ENCODE measurements at regions of chr9 and their contacts with region 1.

Region 1: GRCh38 chr9:4366591-4367330 is 66.9 kb upstream of the GLIS3 start:
- DNase-seq: no peak
- ATAC-seq: no peak
- H3K4me3 Mint-ChIP-seq: no peak overlapping the region
- H3K27ac Mint-ChIP-seq: no peak overlapping the region
- H3K4me1 Mint-ChIP-seq: no peaks in the 10 kb centered on the region
- H3K27me3 Mint-ChIP-seq: peaks cover 10% of the 10 kb centered on the region
- CTCF ChIP-seq: peak; percentile 31

Region 2: GRCh38 chr9:4356306-4356705 is 10.5 kb before region 1 on chr9:
- CTCF ChIA-PET with region 1: interaction called, 10 read pairs
- POLR2A ChIA-PET with region 1: no interaction called
- intact Hi-C with region 1: no loop called
- DNase-seq: no peak
- ATAC-seq: no peak
- H3K4me3 Mint-ChIP-seq: no peak overlapping the region
- H3K27ac Mint-ChIP-seq: no peak overlapping the region
- H3K4me1 Mint-ChIP-seq: no peaks in the 10 kb centered on the region
- H3K27me3 Mint-ChIP-seq: peaks cover 11% of the 10 kb centered on the region
- CTCF ChIP-seq: no peak

Measured in activated B cell treated with CpG ODN at 0.5 μM for 24 hours (primary cell).